ENCODE measurements at regions of chr5 and their contacts with region 1.

Region 1: DNA sequence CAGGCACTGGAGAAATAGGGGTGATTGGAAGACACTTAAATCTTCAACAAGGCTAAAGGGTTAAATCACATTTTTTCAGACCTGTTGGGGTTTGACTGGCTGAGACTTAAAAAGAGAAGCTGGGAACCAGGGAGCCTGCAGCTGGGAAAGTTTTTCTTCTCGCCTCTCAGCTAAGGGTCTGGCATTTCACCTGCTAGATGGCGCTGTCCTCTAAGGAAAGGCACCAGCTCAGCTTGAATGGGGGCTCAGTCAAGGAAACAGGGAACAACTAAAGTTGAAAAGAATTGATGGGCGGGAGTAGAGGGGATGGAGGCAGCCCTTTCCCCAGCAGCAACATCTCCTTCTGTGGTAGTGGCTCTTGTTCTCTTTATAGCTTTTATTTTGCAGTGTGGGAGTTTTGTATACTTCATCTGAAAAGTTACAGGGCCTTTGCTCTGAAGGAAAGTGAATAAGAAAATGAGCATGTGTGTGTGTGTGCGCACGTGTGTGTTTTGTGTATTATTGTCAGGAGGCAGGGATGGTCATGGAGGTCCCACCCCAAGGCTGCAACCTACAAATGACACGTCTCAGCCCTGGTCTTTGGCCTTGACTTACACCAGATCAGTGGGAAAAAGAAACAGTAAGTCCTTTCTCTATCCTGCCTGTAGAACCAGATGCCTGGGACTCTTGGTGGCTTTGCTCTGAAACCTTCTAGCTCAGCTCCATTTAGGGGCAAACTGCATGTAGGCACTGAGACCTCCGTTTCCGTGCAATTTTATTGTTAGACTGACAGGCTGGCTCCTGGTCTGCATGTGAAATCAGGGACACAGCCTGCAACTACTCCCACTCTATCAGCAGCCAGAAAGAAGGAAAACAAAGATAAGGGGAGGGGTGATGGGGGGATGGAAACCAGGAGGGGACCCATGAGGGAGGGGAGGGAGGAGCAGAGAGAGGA is 316.2 kb upstream of the CLINT1 start:
- DNase-seq: peak; percentile 87
- H3K4me3 ChIP-seq: no peak overlapping the region
- H3K27ac ChIP-seq: no peak overlapping the region
- H3K4me1 ChIP-seq: peaks cover 6% of the 10 kb centered on the region
- H3K27me3 ChIP-seq: no peaks in the 10 kb centered on the region
- CTCF ChIP-seq: peak; percentile 56

Region 2: GRCh38 chr5:157743163-157744050 is 431.8 kb before region 1 on chr5 and contains the start of gene LSM11:
- intact Hi-C with region 1: no loop called
- DNase-seq: peak; percentile 90
- H3K4me3 ChIP-seq: peak within 1 kb of the TSS; percentile 77
- H3K27ac ChIP-seq: no peak within 1 kb of the TSS
- H3K4me1 ChIP-seq: peaks cover 5% of the 10 kb centered on the region
- H3K27me3 ChIP-seq: no peaks in the 10 kb centered on the region
- CTCF ChIP-seq: peak; percentile 99
- total RNA-seq, gene LSM11: 5.1 to 6.6 TPM

Region 3: GRCh38 chr5:158013939-158014338 is 161.2 kb before region 1 on chr5:
- intact Hi-C with region 1: loop called (anchors 10 kb)
- DNase-seq: no peak
- H3K4me3 ChIP-seq: no peak overlapping the region
- H3K27ac ChIP-seq: no peak overlapping the region
- H3K4me1 ChIP-seq: no peaks in the 10 kb centered on the region
- H3K27me3 ChIP-seq: no peaks in the 10 kb centered on the region
- CTCF ChIP-seq: peak; percentile 35

Region 4: DNA sequence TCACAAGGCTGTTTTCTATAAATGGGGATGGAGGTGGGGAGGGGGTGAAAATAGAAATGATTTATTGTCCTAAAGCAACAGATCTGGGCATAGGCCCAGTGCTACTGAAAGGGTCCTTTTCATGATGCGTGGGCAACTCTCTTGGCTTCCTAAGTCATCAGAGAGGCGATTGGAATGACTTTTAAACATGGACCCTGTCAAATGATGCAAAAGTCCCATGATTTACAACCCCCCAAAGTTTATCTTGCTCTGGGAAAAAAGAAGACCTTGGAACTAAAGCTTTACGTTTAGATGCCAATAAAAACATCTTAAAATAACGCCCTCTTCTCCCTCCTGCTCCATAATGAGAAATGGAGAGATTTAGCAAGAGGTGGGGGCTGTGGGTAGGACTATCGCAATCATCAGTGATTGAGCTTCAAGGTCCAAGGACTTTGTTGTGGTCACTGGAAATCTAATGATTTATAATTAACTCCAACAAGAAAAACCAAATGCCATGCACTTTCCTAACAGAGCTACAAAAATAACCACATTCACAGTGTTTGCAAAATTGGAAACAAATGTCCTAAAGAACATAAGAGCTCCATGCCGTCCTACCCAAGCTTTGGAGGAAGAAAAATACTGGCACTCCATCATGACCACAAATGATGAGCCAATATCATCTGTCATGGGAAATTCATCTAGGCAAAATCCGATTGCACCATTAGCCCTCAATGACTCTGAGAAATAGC is 148.7 kb before region 1 on chr5:
- intact Hi-C with region 1: no loop called
- DNase-seq: no peak
- H3K4me3 ChIP-seq: no peak overlapping the region
- H3K27ac ChIP-seq: no peak overlapping the region
- H3K4me1 ChIP-seq: no peaks in the 10 kb centered on the region
- H3K27me3 ChIP-seq: no peaks in the 10 kb centered on the region
- CTCF ChIP-seq: no peak

Region 5: GRCh38 chr5:158695595-158696330 is 520.6 kb after region 1 on chr5:
- intact Hi-C with region 1: loop called (anchors 10 kb)
- DNase-seq: peak; percentile 73
- H3K4me3 ChIP-seq: no peak overlapping the region
- H3K27ac ChIP-seq: no peak overlapping the region
- H3K4me1 ChIP-seq: no peaks in the 10 kb centered on the region
- H3K27me3 ChIP-seq: no peaks in the 10 kb centered on the region
- CTCF ChIP-seq: peak; percentile 91

Region 6: DNA sequence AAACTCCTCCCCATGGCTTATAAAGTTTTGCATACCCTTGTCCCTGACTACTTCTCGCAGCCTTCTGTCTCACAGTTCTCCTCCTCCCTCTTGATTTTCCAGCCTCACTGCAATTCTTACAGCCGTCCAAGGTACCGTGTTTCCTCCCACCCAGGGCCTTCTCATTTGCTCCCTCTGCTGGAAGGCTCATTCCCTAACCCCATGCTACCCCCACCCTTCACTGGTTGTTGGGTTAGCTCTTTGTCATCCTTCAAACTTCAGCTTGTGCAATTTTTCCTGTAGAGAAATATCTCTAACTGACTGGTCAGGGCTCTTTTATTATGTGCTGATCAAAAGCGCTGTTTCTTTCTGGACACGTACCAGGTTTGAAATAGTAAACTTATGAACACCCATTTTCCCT is 595.3 kb after region 1 on chr5:
- intact Hi-C with region 1: loop called (anchors 10 kb)
- DNase-seq: no peak
- H3K4me3 ChIP-seq: no peak overlapping the region
- H3K27ac ChIP-seq: no peak overlapping the region
- H3K4me1 ChIP-seq: no peaks in the 10 kb centered on the region
- H3K27me3 ChIP-seq: no peaks in the 10 kb centered on the region
- CTCF ChIP-seq: no peak

Region 7: DNA sequence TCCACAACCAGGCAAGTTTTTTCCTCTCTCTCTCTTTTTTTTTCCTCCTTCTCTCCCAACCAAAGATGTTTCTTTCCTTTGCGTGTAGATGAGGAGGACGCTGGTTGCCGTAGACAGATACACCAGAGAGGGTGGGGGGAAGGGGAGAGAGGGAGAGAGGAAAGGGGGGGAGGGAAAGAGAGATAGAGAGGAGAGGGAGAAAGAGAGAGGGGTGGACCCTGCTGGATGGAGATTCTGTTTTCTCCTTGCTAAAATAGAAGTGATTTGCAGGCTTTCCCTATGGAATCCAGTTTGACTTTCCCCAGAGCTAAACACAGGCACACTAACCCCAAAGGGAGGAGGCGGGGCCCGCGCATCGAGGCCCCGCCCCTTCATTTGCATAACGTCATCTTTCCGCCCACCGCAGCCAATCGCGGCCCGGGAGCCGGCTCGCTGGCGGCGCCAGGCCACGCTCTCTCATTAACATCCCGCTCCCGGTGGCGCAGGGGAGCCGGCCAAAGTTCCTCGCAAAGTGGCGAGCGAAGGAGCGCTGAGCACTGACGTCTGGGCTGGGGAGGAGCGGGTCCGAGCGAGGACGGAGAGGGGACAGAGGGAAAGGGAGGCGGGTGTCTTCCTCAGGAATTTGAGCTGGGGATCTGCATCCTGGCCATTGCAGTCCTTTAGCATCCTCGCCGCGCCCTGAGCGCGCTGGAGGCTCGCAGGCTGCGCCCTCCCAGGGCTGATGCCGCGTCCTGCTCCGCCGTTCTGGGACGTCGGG is 925.0 kb after region 1 on chr5:
- intact Hi-C with region 1: loop called (anchors 5 kb)
- DNase-seq: peak; percentile 85
- H3K4me3 ChIP-seq: peak overlapping the region; percentile 35
- H3K27ac ChIP-seq: peak overlapping the region; percentile 44
- H3K4me1 ChIP-seq: no peaks in the 10 kb centered on the region
- H3K27me3 ChIP-seq: peaks cover 82% of the 10 kb centered on the region
- CTCF ChIP-seq: no peak